ENCODE measurements at regions of chr1 and their contacts with region 1.

Region 1: GRCh38 chr1:35192853-35193664 is at the start of gene SFPQ:
- DNase-seq: peak; percentile 98
- H3K4me3 Mint-ChIP-seq: peak within 1 kb of the TSS; percentile 95
- H3K27ac Mint-ChIP-seq: peak within 1 kb of the TSS; percentile 98
- H3K4me1 Mint-ChIP-seq: peaks cover 35% of the 10 kb centered on the region
- H3K27me3 Mint-ChIP-seq: no peaks in the 10 kb centered on the region
- total RNA-seq, gene SFPQ: 259 to 275 TPM

Region 2: DNA sequence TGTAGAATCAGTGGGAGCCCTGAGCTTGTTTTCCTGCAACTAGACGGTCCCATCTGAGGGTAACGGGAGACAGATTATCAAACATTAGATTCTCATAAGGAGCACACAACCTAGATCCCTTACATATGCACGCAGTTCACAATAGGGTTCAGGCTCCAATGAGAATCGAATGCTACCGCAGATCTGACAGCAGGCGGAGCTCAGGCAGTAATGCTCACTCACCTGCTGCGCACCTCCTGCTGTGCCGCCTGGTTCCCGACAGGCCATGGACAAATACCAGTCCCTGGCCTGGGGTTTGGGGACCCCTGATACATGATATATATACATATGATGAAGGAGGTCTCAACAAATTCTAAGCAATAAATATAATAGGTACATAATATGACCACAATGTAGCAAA is 313.8 kb before region 1 on chr1:
- CTCF ChIA-PET with region 1: no interaction called
- POLR2A ChIA-PET with region 1: no interaction called
- intact Hi-C with region 1: no loop called
- DNase-seq: no peak
- H3K4me3 Mint-ChIP-seq: no peak overlapping the region
- H3K27ac Mint-ChIP-seq: no peak overlapping the region
- H3K4me1 Mint-ChIP-seq: no peaks in the 10 kb centered on the region
- H3K27me3 Mint-ChIP-seq: peaks cover 24% of the 10 kb centered on the region

Region 3: DNA sequence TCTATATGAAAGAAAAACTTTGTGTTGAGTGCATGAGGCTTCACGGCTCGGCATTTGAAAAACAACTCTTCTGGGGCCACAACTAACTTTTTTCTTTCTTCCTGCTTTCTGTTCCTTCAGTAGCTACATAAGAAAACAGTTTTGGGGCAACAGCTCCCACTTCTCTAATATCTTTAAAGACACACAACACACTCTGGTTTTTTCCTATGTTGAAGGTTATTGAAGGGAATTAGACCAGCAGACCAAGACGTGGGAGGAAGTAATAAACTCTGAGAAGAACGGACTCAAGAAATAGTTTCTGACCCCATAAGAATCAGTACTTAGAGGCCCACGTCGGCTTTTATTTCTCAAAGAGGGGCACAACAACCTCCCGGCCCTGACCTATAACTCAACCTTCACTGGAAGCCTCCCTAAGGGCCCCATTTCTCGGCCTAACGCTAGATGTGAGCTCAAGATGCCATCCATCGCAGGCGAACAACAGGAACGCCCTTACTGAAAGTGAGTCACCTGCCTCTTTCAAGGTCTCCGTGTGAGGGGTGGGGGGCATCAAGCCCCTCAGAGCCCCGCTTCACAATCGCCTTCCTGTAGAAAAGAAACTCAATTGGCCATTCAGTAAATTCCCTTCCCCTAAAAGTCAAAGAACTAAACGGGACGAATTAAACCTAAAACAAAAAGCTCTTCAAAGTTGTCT is 162.2 kb before region 1 on chr1:
- CTCF ChIA-PET with region 1: no interaction called
- POLR2A ChIA-PET with region 1: interaction called, 3 read pairs
- intact Hi-C with region 1: loop called (anchors 1 kb)
- DNase-seq: peak; percentile 58
- H3K4me3 Mint-ChIP-seq: peak overlapping the region; percentile 99
- H3K27ac Mint-ChIP-seq: peak overlapping the region; percentile 96
- H3K4me1 Mint-ChIP-seq: peaks cover 29% of the 10 kb centered on the region
- H3K27me3 Mint-ChIP-seq: no peaks in the 10 kb centered on the region

Region 4: GRCh38 chr1:35164893-35165292 is 28.2 kb before region 1 on chr1:
- CTCF ChIA-PET with region 1: no interaction called
- POLR2A ChIA-PET with region 1: no interaction called
- intact Hi-C with region 1: no loop called
- DNase-seq: no peak
- H3K4me3 Mint-ChIP-seq: no peak overlapping the region
- H3K27ac Mint-ChIP-seq: no peak overlapping the region
- H3K4me1 Mint-ChIP-seq: no peaks in the 10 kb centered on the region
- H3K27me3 Mint-ChIP-seq: no peaks in the 10 kb centered on the region

Region 5: DNA sequence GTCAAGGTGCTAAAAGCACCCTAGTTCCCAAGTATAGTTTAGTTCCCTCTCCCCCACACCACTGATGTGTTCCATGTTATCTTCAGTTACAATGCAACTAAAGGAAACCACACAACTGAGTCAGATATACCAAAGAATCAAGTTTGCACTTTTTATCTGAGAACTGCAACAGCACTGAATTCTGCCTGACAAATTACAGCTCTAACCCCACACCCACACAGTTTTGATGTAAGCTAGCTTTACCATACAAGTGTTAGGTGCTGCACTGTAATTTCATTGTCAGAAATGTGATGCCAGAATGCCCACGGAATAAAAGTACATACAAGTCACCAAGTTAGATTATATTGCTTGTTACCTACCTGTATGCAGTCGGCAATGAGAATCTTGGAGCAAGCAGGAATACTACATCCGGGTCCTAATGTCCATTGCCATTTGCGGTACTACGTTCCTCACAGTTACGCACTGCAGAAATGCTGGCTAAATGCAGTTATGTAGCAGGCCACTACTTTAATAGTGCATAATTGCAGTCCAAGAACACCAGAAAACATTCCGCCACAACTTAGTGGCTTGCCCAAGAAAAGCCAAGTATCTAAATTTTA is 12.2 kb before region 1 on chr1:
- CTCF ChIA-PET with region 1: interaction called, 6 read pairs
- POLR2A ChIA-PET with region 1: interaction called, 22 read pairs
- intact Hi-C with region 1: no loop called
- DNase-seq: peak; percentile 33
- H3K4me3 Mint-ChIP-seq: peak overlapping the region; percentile 27
- H3K27ac Mint-ChIP-seq: peak overlapping the region; percentile 83
- H3K4me1 Mint-ChIP-seq: peaks cover 65% of the 10 kb centered on the region
- H3K27me3 Mint-ChIP-seq: no peaks in the 10 kb centered on the region

Region 6: DNA sequence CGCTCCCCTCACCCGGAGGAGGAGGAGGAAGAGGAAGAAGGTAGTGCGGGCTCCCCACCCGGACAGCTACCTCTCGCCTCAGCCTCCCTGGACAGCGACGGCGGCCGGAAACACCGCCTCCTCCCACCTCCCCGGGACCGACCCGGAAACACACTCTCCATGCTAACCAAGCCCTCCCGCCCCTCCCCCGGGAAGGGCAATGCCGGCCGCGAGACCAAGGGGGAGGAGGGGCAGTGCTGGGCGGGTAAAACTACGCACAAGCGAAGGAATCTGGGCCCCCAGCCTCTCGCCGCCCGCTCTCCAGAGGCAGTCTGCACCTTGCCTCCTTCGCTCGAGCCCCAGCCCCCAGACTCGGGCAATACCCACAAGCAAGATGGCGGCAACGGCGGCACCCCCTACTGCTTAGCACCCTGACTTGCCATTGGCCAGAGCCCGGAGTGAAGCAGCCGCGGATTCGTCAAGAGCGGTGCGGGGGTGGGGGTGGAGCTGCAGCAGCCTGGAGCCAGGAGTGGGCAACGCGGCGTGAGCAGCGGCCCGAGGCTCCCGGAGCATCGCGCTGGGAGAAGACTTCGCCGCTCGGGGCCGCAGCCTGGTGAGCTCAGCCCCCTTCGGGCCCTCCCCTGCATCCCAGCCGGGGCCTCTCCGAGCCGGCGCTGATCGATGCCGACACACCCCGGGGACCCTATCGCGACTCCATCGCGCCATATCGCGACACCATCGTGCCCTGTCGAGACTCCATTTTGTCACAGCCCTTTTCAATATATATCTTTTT is 364.4 kb after region 1 on chr1 and contains the starts of genes KIAA0319L and NCDN:
- CTCF ChIA-PET with region 1: no interaction called
- POLR2A ChIA-PET with region 1: no interaction called
- intact Hi-C with region 1: loop called (anchors 5 kb)
- DNase-seq: peak; percentile 98
- H3K4me3 Mint-ChIP-seq: peak within 1 kb of the TSS; percentile 97
- H3K27ac Mint-ChIP-seq: peak within 1 kb of the TSS; percentile 95
- H3K4me1 Mint-ChIP-seq: peaks cover 58% of the 10 kb centered on the region
- H3K27me3 Mint-ChIP-seq: no peaks in the 10 kb centered on the region
- total RNA-seq, gene KIAA0319L: 28.3 to 30.9 TPM
- total RNA-seq, gene NCDN: 21.6 to 21.7 TPM

Region 7: DNA sequence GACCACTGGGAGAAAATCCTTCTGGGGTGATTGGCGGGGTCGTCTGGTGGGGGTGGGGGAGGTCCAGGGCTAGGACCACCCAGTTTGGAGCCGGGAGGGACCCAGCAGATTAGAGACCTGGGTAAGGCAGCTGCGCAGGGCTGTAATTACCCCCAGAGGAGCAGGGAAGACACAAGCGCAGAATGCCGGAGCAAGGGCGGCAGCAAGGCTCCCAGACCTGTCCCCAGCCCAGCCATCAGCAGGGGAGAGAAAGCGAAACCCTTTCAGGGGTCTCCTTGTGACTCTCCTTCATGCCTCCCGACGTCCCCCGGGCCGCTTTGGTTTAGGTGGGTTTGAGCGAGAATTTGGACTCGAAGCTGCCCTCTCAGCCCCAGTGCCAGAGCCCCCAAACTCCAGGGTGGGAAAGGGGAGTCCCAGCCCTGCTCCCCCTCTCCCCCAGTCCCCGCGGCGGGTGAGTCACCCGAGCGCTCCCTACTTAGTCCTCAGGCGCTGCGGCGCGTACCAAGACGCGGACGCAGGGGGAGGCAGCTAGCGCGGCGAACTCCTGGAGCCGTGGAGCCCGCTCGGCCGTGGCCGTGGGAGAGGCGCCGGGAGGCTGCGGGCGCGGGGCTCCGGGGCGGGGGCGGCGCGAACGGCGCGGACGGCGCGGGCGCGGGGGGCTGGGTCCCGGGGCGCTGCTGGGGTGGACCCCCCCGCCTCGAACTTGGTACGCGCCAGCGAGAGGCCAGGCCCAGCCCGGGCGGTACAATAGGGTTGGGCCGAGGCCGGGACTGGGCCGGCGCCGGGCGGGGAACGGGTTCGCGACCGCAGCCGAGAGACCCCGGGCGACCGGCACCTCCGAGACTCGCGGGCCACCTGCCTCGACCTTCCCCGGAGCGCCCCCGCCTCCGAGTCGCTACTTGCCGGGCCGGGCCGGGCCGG is 962.6 kb after region 1 on chr1 and contains the start of gene MAP7D1:
- CTCF ChIA-PET with region 1: no interaction called
- POLR2A ChIA-PET with region 1: no interaction called
- intact Hi-C with region 1: loop called (anchors 5 kb)
- DNase-seq: peak; percentile 88
- H3K4me3 Mint-ChIP-seq: peak within 1 kb of the TSS; percentile 86
- H3K27ac Mint-ChIP-seq: peak within 1 kb of the TSS; percentile 92
- H3K4me1 Mint-ChIP-seq: peaks cover 68% of the 10 kb centered on the region
- H3K27me3 Mint-ChIP-seq: no peaks in the 10 kb centered on the region
- total RNA-seq, gene MAP7D1: 138 to 143 TPM